ENCODE measurements at regions of chr9 and their contacts with region 1.

Region 1: GRCh38 chr9:71966601-71967000 is 55.2 kb downstream of the C9orf85 start:
- DNase-seq: no peak
- ATAC-seq: no peak
- H3K4me3 ChIP-seq: no peak overlapping the region
- H3K27ac ChIP-seq: no peak overlapping the region
- H3K4me1 ChIP-seq: no peaks in the 10 kb centered on the region
- H3K27me3 ChIP-seq: no peaks in the 10 kb centered on the region
- CTCF ChIP-seq: no peak
- POLR2A ChIP-seq: no peak

Region 2: DNA sequence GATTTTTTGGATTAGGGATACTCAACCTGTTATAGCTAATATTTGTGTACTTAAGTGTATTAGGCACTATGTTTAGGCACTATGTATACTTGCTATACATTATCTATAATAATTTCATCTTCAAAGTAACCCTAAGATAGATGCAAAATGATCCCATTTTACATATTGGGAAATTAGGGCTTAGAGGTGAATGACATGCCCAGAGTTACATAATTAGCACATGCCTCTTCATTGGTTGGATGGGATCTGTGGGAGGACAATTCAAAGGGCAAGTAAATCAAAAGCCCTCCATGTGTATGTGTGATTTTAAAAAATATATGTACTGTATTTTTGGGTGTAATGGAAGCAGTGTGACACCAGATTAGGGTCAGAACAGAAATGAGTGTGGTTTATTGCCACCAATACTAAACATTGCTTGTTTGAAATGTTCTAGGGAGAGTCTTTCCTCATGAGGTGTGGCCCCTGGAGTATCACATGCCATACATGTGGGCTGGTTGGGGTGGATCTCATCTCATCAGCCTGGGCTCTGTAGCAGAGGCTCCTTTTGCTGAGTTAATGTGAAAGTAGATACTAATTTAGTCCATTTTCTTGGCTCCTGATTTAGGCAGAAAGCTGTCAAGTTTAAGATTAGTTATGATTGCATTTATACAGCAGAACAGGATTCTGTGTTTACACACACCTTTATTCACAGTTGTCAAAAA is 49.6 kb before region 1 on chr9:
- in situ Hi-C with region 1: no loop called
- intact Hi-C with region 1: loop called (anchors 2 kb)
- DNase-seq: no peak
- ATAC-seq: no peak
- H3K4me3 ChIP-seq: no peak overlapping the region
- H3K27ac ChIP-seq: no peak overlapping the region
- H3K4me1 ChIP-seq: peaks cover 25 to 27% of the 10 kb centered on the region in 2 donors
- H3K27me3 ChIP-seq: no peaks in the 10 kb centered on the region
- CTCF ChIP-seq: no peak
- POLR2A ChIP-seq: no peak

Measured in gastrocnemius medialis (tissue), 4 donors.